Posterior cingulate gyrus (tissue), 11 donors: ENCODE measurements at regions of chr4 and their contacts with region 1.

Region 1: DNA sequence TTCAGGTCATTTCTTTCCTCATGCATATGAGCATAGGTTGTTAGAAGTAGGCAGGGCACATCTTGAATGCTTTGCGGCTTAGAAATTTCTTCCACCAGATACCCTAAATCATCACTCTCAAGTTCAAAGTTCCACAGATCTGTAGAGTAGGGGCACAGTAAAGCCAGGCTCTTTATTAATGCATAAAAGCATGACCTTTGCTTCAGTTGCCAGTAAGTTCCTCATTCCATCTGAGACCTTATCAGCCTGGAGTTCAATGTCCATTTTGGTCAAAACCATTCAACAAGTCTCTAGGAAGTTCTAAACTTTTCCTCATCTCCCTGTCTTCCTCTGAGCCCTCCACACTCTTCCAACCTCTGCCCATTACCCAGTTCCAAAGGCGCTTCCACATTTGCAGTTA is 77.7 kb downstream of the MAP9 start:
- DNase-seq: no peak

Region 2: DNA sequence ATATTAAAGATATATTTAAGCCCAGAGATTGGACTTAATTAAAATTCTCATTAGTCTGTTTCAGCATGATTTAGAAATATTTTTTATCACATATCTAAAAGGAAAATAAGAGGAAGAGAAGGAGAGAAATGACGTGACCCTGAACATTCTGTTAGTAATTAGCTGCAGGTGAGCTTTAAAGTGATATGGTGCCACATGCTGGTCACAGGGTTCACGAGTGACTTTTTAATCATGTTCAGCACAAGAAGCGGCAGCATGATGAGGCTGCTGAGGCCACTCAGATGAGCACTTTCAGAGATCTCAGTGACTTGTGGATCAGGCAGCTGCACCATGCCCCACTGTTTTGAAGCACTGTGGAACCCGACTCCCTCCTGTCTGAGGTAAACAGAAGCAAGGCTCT is 128.5 kb before region 1 on chr4:
- intact Hi-C with region 1: no loop called
- DNase-seq: no peak

Region 3: GRCh38 chr4:155271557-155271956 is 27.5 kb before region 1 on chr4:
- intact Hi-C with region 1: loop called (anchors 1 kb)
- DNase-seq: no peak